Posterior vena cava (tissue), 2 donors: ENCODE measurements at regions of chrX and their contacts with region 1.

Region 1: DNA sequence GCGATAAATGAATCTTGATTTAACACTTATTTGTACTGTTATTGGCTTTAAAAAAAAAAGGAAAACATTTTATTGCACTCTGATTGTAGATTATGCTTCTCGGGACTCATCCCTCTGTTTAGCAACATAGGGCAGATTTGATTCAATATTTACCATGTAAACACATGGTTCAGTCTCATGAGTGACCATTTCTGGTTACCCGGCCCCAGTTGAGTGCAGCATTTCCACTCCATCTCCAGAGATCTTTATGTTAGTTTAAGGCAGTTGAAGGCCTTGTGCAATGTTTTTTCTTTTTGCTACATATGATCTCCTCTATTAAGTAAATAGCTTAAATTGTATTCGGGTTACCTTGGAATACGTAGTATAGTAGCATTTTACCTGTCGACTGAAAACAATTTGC is 143.3 kb upstream of the RPS6KA3 start:
- DNase-seq: no peak

Region 2: GRCh38 chrX:20265221-20265725 is 144.7 kb before region 1 on chrX:
- intact Hi-C with region 1: no loop called
- DNase-seq: peak; percentile 89

Region 3: DNA sequence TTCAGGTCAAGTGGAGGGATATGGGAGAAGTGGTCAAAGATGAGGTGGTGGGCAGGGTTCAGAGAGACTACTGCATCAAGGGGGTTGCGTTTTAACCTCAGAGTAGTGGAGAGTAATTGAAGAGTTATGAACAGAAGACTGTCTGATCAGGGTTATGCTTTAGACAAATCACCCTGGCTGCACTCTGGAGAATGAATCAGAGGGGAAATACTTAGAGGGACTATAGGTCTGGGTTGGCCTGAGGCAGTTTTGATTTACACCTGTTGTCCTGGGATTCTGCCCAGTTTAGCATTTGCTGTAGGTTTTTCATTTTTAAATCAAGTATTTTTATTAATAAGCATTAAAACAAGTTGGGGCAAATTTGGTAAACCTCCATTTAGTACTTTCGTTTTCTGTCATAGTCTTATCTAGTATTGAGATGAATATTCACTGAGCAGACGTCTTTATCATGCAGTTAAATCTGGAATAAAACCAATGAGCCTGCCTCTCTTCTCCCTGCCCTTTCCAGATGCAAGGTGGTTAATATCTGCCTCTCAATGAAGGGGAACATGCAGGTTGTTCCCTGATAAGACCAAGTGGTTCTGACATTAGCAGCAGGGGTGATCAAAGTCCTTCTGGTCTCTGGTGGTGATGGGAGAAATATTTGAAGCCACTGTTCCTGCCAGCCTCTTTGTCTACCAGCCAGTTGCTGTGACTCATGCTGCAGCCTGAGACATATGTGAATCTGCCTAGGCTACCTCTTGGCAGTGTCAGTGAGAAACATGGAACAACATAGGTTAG is 27.3 kb before region 1 on chrX:
- intact Hi-C with region 1: no loop called
- DNase-seq: no peak

Region 4: DNA sequence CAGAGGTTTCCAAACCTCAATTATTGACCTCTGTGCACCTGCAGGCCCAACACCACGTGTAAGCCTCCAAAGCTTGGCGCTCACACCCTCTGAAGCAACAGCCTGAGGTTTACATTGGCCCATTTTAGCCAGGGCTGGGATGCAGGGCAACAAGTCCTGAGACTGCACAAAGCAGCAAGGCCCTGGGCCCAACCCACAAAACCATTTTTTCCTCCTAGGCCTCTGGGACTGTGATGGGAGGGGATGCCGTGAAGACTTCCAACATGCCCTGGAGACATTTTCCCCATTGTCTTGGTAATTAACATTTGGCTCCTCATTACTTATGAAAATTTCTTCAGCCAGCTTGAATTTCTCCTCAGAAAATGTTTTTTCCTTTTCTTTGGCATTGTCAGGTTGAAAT is 909.3 kb after region 1 on chrX:
- intact Hi-C with region 1: loop called in 1 of 2 experiments (anchors 5 kb)
- DNase-seq: peak; percentile 57